ENCODE measurements at regions of chr7 and their contacts with region 1.

Region 1: DNA sequence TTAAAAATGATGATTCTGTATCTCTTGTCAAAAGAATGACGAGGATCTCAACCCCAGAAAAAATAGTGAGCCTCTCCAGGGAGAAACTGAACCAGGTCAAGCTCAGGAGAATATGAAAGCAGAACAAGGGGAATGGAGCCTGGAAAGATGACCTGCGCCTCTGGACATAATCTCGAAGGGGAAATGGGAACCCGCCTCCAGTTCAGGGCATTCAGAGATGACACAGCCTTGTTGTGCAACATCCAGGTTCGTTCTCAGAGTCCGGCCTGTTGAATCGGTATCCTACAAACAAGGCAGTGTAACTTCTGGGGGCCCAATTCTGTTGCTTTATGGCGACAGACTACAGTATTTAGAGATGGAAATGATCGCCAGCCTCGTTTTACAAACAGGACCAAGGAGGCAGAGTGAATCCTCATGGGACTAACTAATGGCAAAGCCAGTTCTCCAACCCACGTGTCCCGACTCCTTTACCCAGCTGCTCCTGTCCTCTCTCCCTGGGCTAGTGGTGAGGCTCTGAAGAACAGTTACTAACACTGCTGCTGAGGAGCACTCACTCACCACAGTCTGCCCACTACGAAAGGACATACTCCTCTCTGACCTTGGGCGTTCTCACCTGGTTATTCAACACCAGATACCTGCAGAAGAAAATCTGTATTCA is 67.6 kb downstream of the JAZF1 start:
- DNase-seq: no peak
- ATAC-seq: peak in 1 of 2 donors; percentile 28
- H3K4me3 ChIP-seq: no peak overlapping the region
- H3K27ac ChIP-seq: no peak overlapping the region
- H3K4me1 ChIP-seq: peaks cover 3% of the 10 kb centered on the region
- H3K27me3 ChIP-seq: no peaks in the 10 kb centered on the region

Region 2: DNA sequence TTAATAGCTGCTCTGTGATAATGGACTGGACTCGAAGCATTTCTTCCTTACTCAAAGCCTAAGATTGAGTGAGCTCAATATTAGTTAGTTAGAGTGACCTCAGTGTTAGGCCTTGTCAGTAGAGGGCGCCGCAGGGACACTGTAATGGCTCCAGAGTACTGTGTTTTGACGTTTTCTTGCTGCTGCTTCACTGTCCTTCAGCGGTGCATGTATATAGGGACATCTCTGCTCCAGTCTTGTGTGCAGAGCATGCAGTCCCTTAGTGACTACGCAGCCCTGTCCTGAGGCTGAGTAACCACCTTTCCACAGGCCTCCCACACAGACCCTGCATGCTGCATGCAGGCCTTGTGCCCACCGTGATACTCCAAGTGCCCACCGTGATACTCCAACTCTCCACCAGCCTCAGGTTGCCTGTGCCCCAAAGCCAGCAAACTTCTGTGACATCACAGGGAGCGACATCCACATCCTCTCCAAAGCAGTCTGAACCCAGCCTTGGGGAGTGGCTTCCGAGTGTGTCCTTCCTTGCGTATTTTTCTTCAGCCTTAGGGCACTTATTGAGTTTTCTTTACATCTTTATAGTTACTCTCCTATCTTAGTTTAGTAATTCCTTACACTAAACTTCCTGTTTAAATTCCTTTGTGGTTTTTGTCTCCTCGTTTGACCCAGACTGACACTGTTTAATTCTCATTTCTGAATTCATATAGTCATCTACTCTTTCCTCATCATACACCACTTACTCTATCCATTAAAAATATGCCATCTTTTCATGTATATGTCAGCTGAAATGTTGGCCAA is 50.6 kb before region 1 on chr7:
- intact Hi-C with region 1: no loop called
- DNase-seq: peak; percentile 66 to 85 (median 76)
- ATAC-seq: peak; percentile 66 to 78
- H3K4me3 ChIP-seq: no peak overlapping the region
- H3K27ac ChIP-seq: no peak overlapping the region
- H3K4me1 ChIP-seq: no peaks in the 10 kb centered on the region
- H3K27me3 ChIP-seq: no peaks in the 10 kb centered on the region

Region 3: GRCh38 chr7:28165961-28166955 is 53.2 kb after region 1 on chr7:
- intact Hi-C with region 1: loop called in 1 of 4 experiments (anchors 10 kb)
- DNase-seq: no peak
- ATAC-seq: no peak
- H3K4me3 ChIP-seq: no peak overlapping the region
- H3K27ac ChIP-seq: no peak overlapping the region
- H3K4me1 ChIP-seq: no peaks in the 10 kb centered on the region
- H3K27me3 ChIP-seq: no peaks in the 10 kb centered on the region